GM12878 (cell line): ENCODE measurements at regions of chr2 and their contacts with region 1.

Region 1: DNA sequence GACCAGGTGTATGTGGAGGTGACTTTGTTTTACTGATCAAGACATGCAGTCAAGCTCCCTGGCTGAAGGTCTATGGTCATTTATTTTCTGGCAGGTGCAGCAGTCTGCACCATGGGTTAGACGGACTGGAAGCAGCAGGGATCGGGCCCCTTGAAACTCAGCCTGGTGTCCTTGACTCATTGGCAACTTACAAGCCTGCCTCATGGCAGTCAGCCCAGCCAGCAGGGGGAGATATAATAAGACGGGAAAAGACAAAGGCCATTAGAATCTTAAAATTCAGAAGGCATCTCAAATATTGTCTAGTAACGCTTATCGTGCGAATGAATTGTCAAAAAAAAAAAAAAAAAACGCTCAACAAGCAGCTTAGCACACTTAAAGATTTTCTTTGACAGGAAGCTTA is 308.2 kb downstream of the EN1 start:
- DNase-seq: no peak
- ATAC-seq: peak; percentile 49; the same call in 2 of the 3 replicates
- H3K4me3 ChIP-seq: no peak overlapping the region
- H3K27ac ChIP-seq: no peak overlapping the region
- H3K4me1 ChIP-seq: no peaks in the 10 kb centered on the region
- H3K27me3 ChIP-seq: no peaks in the 10 kb centered on the region
- CTCF ChIP-seq: peak in 2 of 3 experiments; percentile 29 to 34; a peak in 4 of 6 replicates
- EP300 ChIP-seq: no peak
- POLR2A ChIP-seq: no peak
- RAD21 ChIP-seq: peak; percentile 21; the same call in 1 of the 2 replicates

Region 2: DNA sequence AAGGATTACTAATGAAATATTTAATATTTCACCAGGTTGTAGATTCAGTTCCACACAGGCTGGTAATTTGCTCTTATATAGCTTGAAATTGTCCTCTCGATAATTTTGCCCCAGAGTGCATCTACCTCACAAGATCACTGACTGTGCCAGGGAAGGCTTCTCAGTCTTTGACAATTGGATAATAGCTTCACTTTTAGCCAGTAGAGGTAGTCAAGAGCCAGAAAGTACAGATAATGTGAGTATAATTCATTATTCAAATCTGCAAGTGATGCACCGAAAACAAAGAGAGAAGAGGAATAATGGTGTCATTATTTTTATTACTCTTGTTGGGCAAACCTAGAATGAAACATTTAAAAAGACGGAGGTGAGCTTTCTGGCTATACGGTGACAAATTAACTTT is 15.3 kb after region 1 on chr2:
- CTCF ChIA-PET with region 1: no interaction called
- POLR2A ChIA-PET with region 1: no interaction called
- RAD21 ChIA-PET with region 1: no interaction called
- SMC1A ChIA-PET with region 1: no interaction called
- in situ Hi-C with region 1: no loop called
- intact Hi-C with region 1: no loop called
- DNase-seq: no peak
- ATAC-seq: no peak
- H3K4me3 ChIP-seq: no peak overlapping the region
- H3K27ac ChIP-seq: no peak overlapping the region
- H3K4me1 ChIP-seq: no peaks in the 10 kb centered on the region
- H3K27me3 ChIP-seq: no peaks in the 10 kb centered on the region; a peak in 1 of 4 replicates
- CTCF ChIP-seq: no peak
- EP300 ChIP-seq: no peak
- POLR2A ChIP-seq: no peak
- RAD21 ChIP-seq: no peak

Region 3: DNA sequence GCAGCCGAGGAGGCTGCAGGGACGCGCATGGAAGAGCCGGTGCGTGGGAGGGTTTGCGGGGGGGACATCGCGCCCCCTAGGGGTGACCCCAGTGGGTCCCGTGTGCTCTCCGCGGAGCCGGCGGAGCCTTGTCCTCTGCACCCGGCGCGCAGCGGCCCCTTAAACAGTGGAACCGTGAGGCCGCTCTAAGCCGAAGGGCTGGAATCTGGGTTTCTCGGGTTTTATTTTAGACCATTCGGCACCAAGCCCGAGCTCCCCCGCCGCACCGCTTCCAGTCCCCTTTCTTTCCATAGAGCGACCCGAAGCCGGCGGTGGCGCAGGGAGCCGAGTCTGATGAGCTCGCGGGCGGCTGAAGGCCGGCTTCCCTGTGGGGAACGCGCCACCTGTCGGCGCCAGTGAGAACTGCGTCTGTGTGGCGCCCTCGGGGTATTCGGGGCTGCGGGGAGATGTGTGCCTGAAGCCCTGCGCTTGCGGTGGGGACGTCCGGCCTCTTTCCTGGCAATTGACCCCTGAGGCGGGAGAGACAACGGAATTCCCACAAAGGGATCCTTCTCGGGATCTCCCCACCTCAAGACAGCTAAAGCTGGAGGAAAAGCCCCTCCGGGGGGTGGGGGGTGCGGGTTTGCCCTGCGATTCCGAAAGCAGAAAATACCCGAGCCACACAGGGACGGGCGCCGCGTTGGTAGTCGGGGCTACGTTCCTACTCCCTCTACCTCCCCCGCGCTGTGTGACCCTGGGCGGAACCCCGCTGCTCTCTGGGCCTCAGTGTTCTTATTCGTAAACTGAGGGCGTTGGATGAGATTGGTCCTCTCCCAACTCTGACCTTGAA is 316.4 kb after region 1 on chr2:
- CTCF ChIA-PET with region 1: interaction called, 10 read pairs
- POLR2A ChIA-PET with region 1: no interaction called
- RAD21 ChIA-PET with region 1: interaction called, 4 read pairs
- SMC1A ChIA-PET with region 1: interaction called, 3 read pairs
- in situ Hi-C with region 1: no loop called
- intact Hi-C with region 1: loop called (anchors 2 kb)
- DNase-seq: no peak
- ATAC-seq: peak; percentile 98
- H3K4me3 ChIP-seq: no peak overlapping the region; the same call in 1 of the 2 replicates
- H3K27ac ChIP-seq: no peak overlapping the region
- H3K4me1 ChIP-seq: no peaks in the 10 kb centered on the region
- H3K27me3 ChIP-seq: peaks cover 18 to 35% of the 10 kb centered on the region in 2 experiments
- CTCF ChIP-seq: peak; percentile 88 to 94 (median 88)
- EP300 ChIP-seq: no peak
- POLR2A ChIP-seq: no peak
- RAD21 ChIP-seq: peak; percentile 81